PC-3 (cell line): ENCODE measurements at regions of chr12 and their contacts with region 1.

Region 1: DNA sequence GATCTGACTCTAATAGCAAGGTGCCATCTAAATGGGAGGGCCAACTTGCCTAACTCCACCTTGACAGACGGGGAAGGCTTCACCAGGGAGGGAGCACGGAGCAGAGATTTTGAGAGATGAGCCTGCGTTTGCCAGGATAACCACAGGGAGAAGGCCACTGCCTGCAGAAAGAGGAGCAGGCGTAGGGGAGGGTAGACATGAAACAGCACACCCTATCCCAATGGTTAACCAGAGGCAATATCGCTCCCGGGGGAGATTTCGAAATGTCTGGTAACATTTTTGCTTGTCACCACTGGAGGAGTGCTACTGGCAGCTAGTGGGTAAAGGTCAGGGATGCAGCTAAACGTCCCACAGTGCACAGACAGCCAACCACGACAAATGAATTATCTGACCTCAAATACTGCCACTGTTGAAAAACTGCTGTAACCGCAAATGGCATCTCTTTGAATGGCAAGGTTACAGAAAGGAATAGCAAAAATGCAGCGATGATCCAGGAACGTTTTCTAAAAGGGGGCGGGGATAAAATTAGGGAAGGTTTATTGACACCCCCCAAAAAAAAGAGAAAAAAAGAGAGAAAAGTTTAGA is 126.0 kb upstream of the ATF7IP start:
- DNase-seq: peak; percentile 63
- ATAC-seq: peak; percentile 79
- H3K4me3 ChIP-seq: peak overlapping the region; percentile 51
- H3K27ac ChIP-seq: peak overlapping the region; percentile 69
- H3K4me1 ChIP-seq: peaks cover 18% of the 10 kb centered on the region
- H3K27me3 ChIP-seq: no peaks in the 10 kb centered on the region
- CTCF ChIP-seq: 0 out of 2 replicates have a peak, but pooled peaks have one; percentile 19

Region 2: GRCh38 chr12:14185427-14186192 is 53.8 kb before region 1 on chr12:
- CTCF ChIA-PET with region 1: no interaction called
- POLR2A ChIA-PET with region 1: no interaction called
- intact Hi-C with region 1: loop called (anchors 5 kb)
- DNase-seq: peak; percentile 63
- ATAC-seq: peak; percentile 76
- H3K4me3 ChIP-seq: no peak overlapping the region
- H3K27ac ChIP-seq: no peak overlapping the region
- H3K4me1 ChIP-seq: no peaks in the 10 kb centered on the region
- H3K27me3 ChIP-seq: no peaks in the 10 kb centered on the region
- CTCF ChIP-seq: peak; percentile 74

Region 3: DNA sequence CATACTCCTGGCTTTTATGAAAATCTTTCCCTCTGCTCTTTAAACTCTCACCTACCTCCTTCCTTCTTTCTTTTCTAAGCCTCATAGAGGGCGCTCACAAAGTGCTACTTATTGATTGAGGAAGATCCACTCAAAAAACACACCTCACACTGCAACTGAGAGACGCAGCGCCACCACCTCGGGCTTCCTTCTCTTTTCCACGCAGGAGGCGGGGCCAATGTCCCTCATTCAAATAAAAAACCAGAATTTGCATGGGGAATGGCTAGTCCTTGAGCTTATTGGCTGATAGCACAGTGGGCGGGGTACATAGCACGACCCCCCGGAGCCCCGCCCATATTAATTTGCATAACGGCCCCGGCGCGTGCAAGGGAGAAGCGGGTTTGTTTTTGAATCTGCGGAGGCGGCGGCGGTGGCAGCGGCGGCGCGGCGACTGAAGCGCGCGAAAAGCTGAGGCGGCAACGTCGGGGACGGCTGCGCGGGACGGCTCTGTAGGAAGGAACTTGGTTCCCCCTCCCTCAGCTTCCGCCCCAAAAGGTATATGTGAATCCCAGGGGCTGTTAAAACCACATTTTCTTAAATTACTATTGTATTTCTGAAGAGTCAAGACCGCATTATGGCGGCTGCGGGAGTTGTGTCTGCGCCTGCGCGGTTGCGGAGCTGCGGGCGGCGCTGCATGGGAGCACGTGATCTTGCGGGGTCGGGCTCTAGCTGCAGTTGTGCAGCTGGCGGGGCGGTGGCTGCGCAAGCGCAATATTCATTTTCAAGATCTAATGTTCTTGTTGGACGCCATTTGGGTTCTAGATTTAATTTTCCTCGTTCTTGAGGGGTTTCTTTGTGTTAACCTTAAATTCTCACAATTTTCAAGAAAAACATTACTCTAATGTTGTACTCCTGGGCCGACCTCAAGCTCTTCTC is 126.1 kb after region 1 on chr12 and contains the start of gene ATF7IP:
- CTCF ChIA-PET with region 1: no interaction called
- POLR2A ChIA-PET with region 1: no interaction called
- intact Hi-C with region 1: loop called (anchors 1 kb)
- DNase-seq: peak; percentile 94
- ATAC-seq: peak; percentile 93
- H3K4me3 ChIP-seq: peak within 1 kb of the TSS; percentile 83
- H3K27ac ChIP-seq: peak within 1 kb of the TSS; percentile 98
- H3K4me1 ChIP-seq: peaks cover 3% of the 10 kb centered on the region; the same call in 1 of the 2 replicates
- H3K27me3 ChIP-seq: no peaks in the 10 kb centered on the region
- CTCF ChIP-seq: peak; percentile 55
- total RNA-seq, gene ATF7IP: 12.5 and 16.9 TPM in 2 replicates

Region 4: GRCh38 chr12:14514154-14514842 is 274.9 kb after region 1 on chr12:
- CTCF ChIA-PET with region 1: interaction called, 7 read pairs
- POLR2A ChIA-PET with region 1: no interaction called
- intact Hi-C with region 1: loop called (anchors 1 kb)
- DNase-seq: peak; percentile 93
- ATAC-seq: peak; percentile 87
- H3K4me3 ChIP-seq: no peak overlapping the region
- H3K27ac ChIP-seq: no peak overlapping the region
- H3K4me1 ChIP-seq: peaks cover 4% of the 10 kb centered on the region; the same call in 1 of the 2 replicates
- H3K27me3 ChIP-seq: no peaks in the 10 kb centered on the region
- CTCF ChIP-seq: peak; percentile 75

Region 5: DNA sequence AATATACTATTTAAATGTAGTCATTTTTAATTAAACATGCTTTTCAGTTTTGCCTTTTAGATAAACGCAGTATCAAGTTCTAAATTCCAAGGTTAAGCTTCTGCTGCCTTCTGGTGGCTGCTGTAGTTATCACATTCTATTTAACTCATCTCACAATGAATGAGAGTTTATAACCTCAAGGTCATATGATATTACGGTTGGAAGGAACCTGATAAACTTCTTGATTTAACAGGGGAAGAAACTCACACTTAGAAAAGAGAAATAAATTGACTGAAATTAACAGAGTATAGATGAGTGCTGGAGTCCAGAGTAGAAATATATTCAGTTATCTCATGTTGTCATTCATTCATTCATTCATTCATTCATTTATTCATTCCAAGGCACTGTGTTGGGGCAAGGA is 425.1 kb after region 1 on chr12:
- CTCF ChIA-PET with region 1: no interaction called
- POLR2A ChIA-PET with region 1: no interaction called
- intact Hi-C with region 1: loop called (anchors 2 kb)
- DNase-seq: peak; percentile 66
- ATAC-seq: 0 out of 2 replicates have a peak, but pooled peaks have one; percentile 35
- H3K4me3 ChIP-seq: no peak overlapping the region
- H3K27ac ChIP-seq: no peak overlapping the region
- H3K4me1 ChIP-seq: no peaks in the 10 kb centered on the region
- H3K27me3 ChIP-seq: peaks cover 4% of the 10 kb centered on the region; the same call in 1 of the 2 replicates
- CTCF ChIP-seq: peak; percentile 60; the same call in 1 of the 2 replicates